ENCODE measurements at regions of chr13 and their contacts with region 1.

Region 1: GRCh38 chr13:75482070-75482819 is at the start of gene TBC1D4:
- DNase-seq: peak; percentile 63
- ATAC-seq: peak; percentile 86
- H3K4me3 Mint-ChIP-seq: peak within 1 kb of the TSS; percentile 98
- H3K27ac Mint-ChIP-seq: no peak within 1 kb of the TSS
- H3K4me1 Mint-ChIP-seq: peaks cover 15% of the 10 kb centered on the region
- H3K27me3 Mint-ChIP-seq: peaks cover 46% of the 10 kb centered on the region
- CTCF ChIP-seq: peak; percentile 39
- total RNA-seq, gene TBC1D4: 1.5 and 2.1 TPM in 2 replicates

Region 2: GRCh38 chr13:75372517-75372916 is 109.7 kb before region 1 on chr13:
- CTCF ChIA-PET with region 1: interaction called, 5 read pairs
- POLR2A ChIA-PET with region 1: no interaction called
- intact Hi-C with region 1: loop called (anchors 1 kb)
- DNase-seq: no peak
- ATAC-seq: peak; percentile 67
- H3K4me3 Mint-ChIP-seq: no peak overlapping the region
- H3K27ac Mint-ChIP-seq: no peak overlapping the region
- H3K4me1 Mint-ChIP-seq: no peaks in the 10 kb centered on the region
- H3K27me3 Mint-ChIP-seq: no peaks in the 10 kb centered on the region
- CTCF ChIP-seq: peak; percentile 69

Region 3: GRCh38 chr13:75537401-75538365 is 55.4 kb after region 1 on chr13 and contains the start of gene COMMD6:
- CTCF ChIA-PET with region 1: no interaction called
- POLR2A ChIA-PET with region 1: no interaction called
- intact Hi-C with region 1: loop called (anchors 1 kb)
- DNase-seq: peak; percentile 68
- ATAC-seq: peak; percentile 93
- H3K4me3 Mint-ChIP-seq: peak within 1 kb of the TSS; percentile 99
- H3K27ac Mint-ChIP-seq: peak within 1 kb of the TSS; percentile 89
- H3K4me1 Mint-ChIP-seq: peaks cover 36% of the 10 kb centered on the region
- H3K27me3 Mint-ChIP-seq: no peaks in the 10 kb centered on the region
- CTCF ChIP-seq: no peak
- total RNA-seq, gene COMMD6: 174 and 177 TPM in 2 replicates

Region 4: DNA sequence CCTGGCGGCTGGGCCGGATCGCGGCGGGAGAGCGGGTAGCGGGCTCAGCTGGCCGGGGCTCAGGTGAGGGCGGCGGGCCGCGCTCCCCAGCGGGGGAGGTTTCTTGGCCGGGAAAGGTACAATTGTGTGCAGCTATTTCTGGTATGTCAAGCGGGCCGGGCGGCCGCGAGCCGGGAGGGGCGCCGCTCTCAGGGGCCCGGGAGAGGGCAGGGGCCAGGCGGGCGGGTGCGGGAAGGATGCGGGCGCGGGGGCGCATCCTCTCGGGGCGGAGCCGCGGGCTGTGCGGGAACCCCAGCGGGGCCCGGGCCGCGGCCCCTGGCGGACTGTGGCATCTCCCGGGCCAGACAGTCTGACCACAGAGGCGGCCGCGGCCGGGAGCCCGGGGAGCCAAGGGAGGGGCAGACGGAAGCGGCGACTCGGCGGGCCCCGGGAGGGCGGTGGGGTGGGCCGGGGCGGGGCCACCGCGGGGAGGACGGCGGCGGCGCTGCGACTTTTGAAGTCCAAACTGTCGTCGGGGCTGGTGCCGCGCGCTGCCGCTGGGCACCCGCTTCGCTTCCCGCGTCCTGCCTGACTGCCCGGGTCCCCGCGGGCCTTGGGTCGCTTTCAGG is 153.7 kb after region 1 on chr13 and contains the start of gene LMO7:
- CTCF ChIA-PET with region 1: no interaction called
- POLR2A ChIA-PET with region 1: no interaction called
- intact Hi-C with region 1: loop called (anchors 2 kb)
- DNase-seq: peak; percentile 61
- ATAC-seq: peak; percentile 68
- H3K4me3 Mint-ChIP-seq: peak within 1 kb of the TSS; percentile 83
- H3K27ac Mint-ChIP-seq: no peak within 1 kb of the TSS
- H3K4me1 Mint-ChIP-seq: peaks cover 12% of the 10 kb centered on the region
- H3K27me3 Mint-ChIP-seq: no peaks in the 10 kb centered on the region
- CTCF ChIP-seq: no peak
- total RNA-seq, gene LMO7: 13.5 and 19.5 TPM in 2 replicates

Measured in activated B cell treated with CpG ODN at 0.5 μM for 24 hours (primary cell).